ENCODE measurements at regions of chr1 and their contacts with region 1.

Region 1: DNA sequence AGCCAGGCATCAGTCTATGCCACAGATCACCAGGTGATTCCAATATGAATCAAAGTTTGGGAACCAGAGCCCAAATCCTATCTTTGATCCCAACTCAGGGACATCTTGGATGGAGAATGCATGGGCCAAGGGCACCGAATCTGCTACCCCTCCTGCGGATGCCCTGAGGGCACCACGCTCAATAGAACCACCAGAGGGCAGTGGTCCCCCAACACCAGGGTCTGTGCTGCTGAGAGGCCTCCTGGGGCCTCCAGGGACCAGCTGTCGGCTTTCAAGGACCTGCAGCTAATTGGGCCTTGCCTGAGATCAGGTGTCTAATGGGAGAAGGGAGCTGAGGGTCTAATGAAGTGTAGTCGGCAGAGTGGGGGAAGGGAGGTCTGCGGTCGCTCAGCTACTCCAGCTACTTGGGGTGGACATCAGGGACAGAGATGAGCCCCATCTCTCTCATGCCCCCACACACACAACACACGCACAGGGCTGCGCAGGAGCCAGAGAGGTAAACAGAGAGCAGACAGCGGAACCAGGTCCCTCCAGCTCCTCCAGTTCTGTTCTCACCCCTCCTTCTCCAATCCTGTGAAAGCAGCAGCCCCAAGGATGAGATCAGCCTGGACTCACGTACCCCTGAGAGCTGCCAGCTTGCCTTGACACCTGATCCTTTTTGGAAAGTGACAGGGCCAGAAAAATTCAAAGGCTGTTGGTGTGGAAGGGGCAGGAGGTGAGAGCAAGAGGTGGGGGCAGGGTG is 34.9 kb upstream of the PPP1R15B start:
- DNase-seq: peak; percentile 84 to 92
- H3K4me3 ChIP-seq: no peak overlapping the region
- H3K27ac ChIP-seq: peak overlapping the region; percentile 5 to 93 (median 47)
- H3K4me1 ChIP-seq: peaks cover 30 to 66% (median 52%) of the 10 kb centered on the region in 4 donors
- H3K27me3 ChIP-seq: no peaks in the 10 kb centered on the region
- CTCF ChIP-seq: peak in 6 of 7 experiments; percentile 22 to 84 (median 74)
- EP300 ChIP-seq: no peak
- POLR2A ChIP-seq: no peak

Region 2: GRCh38 chr1:204503122-204503912 is 56.8 kb after region 1 on chr1:
- intact Hi-C with region 1: loop called (anchors 5 kb)
- DNase-seq: peak in 1 of 2 donors; percentile 90
- H3K4me3 ChIP-seq: no peak overlapping the region
- H3K27ac ChIP-seq: peak overlapping the region in 3 of 5 donors; percentile 29 to 90 (median 61)
- H3K4me1 ChIP-seq: peaks cover 24 to 46% (median 30%) of the 10 kb centered on the region in 4 donors
- H3K27me3 ChIP-seq: no peaks in the 10 kb centered on the region
- CTCF ChIP-seq: peak in 5 of 7 experiments; percentile 53 to 89 (median 71)
- EP300 ChIP-seq: no peak
- POLR2A ChIP-seq: no peak